Activated naive CD4-positive, alpha-beta T cell treated with anti-CD3 and anti-CD28 coated beads, Interleukin-2, amount 10 ng/mL, durations not matched to agents 7 days and 5 days (primary cell): ENCODE measurements at regions of chr9 and their contacts with region 1.

Region 1: GRCh38 chr9:36995927-36996705 is 38.0 kb downstream of the PAX5 start:
- DNase-seq: peak; percentile 74
- H3K4me3 Mint-ChIP-seq: no peak overlapping the region
- H3K27ac Mint-ChIP-seq: no peak overlapping the region
- H3K4me1 Mint-ChIP-seq: peaks cover 3% of the 10 kb centered on the region
- H3K27me3 Mint-ChIP-seq: peaks cover 80% of the 10 kb centered on the region

Region 2: DNA sequence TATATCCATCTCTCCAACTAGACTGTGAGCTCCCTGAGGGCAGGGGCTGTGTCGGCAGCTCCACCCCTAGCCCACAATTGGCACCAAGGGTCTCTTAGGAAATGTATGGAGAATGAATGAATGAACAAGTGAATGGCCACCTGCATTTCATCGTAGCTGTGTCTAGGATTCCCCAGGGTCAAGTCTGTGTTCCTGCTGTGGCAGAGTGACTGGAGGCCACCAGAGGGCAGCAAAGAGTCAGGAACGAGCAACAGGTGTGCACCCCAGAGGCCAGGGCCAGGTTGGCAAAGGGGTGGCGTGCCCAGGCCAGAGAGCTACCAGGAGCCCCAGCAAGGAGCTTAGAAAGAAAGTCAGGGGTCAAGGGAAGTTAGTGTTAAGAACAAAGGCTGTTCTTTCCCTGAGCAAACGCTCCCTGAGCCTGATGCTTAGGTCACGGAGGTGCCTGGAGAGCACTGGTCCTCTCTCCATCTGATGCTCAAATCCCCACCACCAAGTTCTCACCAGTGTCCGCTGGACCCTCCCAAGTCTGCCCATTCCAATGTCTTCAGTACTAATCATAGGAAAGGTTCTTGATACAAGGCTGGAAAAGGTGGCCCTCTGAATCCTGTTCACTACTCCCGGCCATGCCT is 122.8 kb before region 1 on chr9:
- CTCF ChIA-PET with region 1: interaction called, 175 read pairs
- DNase-seq: peak; percentile 82
- H3K4me3 Mint-ChIP-seq: no peak overlapping the region
- H3K27ac Mint-ChIP-seq: no peak overlapping the region
- H3K4me1 Mint-ChIP-seq: no peaks in the 10 kb centered on the region
- H3K27me3 Mint-ChIP-seq: peaks cover 28% of the 10 kb centered on the region

Region 3: GRCh38 chr9:37010180-37010579 is 14.1 kb after region 1 on chr9:
- CTCF ChIA-PET with region 1: interaction called, 10 read pairs
- DNase-seq: no peak
- H3K4me3 Mint-ChIP-seq: no peak overlapping the region
- H3K27ac Mint-ChIP-seq: no peak overlapping the region
- H3K4me1 Mint-ChIP-seq: no peaks in the 10 kb centered on the region
- H3K27me3 Mint-ChIP-seq: peaks cover 73% of the 10 kb centered on the region

Region 4: GRCh38 chr9:37187713-37188439 is 191.8 kb after region 1 on chr9:
- CTCF ChIA-PET with region 1: no interaction called
- DNase-seq: no peak
- H3K4me3 Mint-ChIP-seq: no peak overlapping the region
- H3K27ac Mint-ChIP-seq: peak overlapping the region; percentile 24
- H3K4me1 Mint-ChIP-seq: peaks cover 24% of the 10 kb centered on the region
- H3K27me3 Mint-ChIP-seq: no peaks in the 10 kb centered on the region

Region 5: DNA sequence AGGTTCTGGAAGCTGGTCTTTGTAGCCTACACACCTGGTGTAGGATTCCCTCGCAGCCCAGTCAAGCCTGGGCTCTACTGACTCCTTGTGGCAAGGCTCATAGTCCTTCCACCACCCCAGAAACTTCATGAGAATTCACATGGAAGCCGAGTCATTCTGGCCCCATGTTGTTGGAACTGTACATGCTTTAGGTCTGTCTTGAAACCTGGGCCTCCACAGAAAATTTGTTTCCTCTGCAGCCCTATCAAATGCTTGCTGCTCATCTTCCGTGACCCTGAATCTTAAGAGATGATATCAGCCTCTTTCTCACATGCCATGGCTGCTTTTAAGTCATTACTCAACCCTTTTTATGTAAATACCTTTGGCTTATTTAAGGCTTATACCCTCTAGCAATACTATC is 313.0 kb after region 1 on chr9:
- CTCF ChIA-PET with region 1: interaction called, 12 read pairs
- DNase-seq: peak; percentile 52
- H3K4me3 Mint-ChIP-seq: no peak overlapping the region
- H3K27ac Mint-ChIP-seq: no peak overlapping the region
- H3K4me1 Mint-ChIP-seq: peaks cover 9% of the 10 kb centered on the region
- H3K27me3 Mint-ChIP-seq: no peaks in the 10 kb centered on the region

Region 6: DNA sequence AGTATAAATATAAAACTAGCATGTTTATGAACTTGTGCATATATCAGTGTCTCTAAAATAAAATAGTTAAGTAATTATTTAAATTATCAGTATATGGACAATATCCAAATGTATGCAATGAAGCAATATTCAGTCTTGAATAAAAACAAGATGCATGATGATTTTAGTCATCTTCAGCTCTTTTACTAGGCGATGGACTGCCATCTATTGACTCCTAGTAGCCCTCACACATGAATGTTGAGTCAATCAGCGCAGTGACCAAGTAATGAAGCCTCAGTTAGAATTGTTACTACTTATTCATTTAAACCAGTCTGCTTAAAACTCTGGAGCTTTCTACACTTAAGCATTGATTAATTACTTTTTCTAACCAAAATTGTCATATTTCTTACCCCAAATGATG is 333.5 kb after region 1 on chr9:
- CTCF ChIA-PET with region 1: interaction called, 11 read pairs
- DNase-seq: peak; percentile 25
- H3K4me3 Mint-ChIP-seq: no peak overlapping the region
- H3K27ac Mint-ChIP-seq: no peak overlapping the region
- H3K4me1 Mint-ChIP-seq: no peaks in the 10 kb centered on the region
- H3K27me3 Mint-ChIP-seq: no peaks in the 10 kb centered on the region

Region 7: GRCh38 chr9:37364751-37365360 is 368.7 kb after region 1 on chr9:
- CTCF ChIA-PET with region 1: interaction called, 10 read pairs
- DNase-seq: peak; percentile 43
- H3K4me3 Mint-ChIP-seq: no peak overlapping the region
- H3K27ac Mint-ChIP-seq: no peak overlapping the region
- H3K4me1 Mint-ChIP-seq: no peaks in the 10 kb centered on the region
- H3K27me3 Mint-ChIP-seq: no peaks in the 10 kb centered on the region